CD4-positive, alpha-beta T cell (primary cell): ENCODE measurements at regions of chrX and their contacts with region 1.

Region 1: GRCh38 chrX:19887911-19888879 is 795 bp upstream of the SH3KBP1 start:
- DNase-seq: peak in 13 of 14 experiments; percentile 9 to 81 (median 26)
- ATAC-seq: peak; percentile 62
- H3K4me3 ChIP-seq: peak overlapping the region; percentile 66
- H3K4me3 Mint-ChIP-seq: peak overlapping the region; percentile 88
- H3K27ac ChIP-seq: peak overlapping the region in 1 of 2 donors; percentile 56
- H3K27ac Mint-ChIP-seq: peak overlapping the region; percentile 85
- H3K4me1 ChIP-seq: peaks cover 34% of the 10 kb centered on the region
- H3K4me1 Mint-ChIP-seq: peaks cover 51% of the 10 kb centered on the region
- H3K27me3 ChIP-seq: no peaks in the 10 kb centered on the region
- H3K27me3 Mint-ChIP-seq: no peaks in the 10 kb centered on the region
- CTCF ChIP-seq: peak; percentile 35

Region 2: GRCh38 chrX:19372170-19372546 is 516.0 kb before region 1 on chrX:
- CTCF ChIA-PET with region 1: no interaction called
- POLR2A ChIA-PET with region 1: interaction called, 3 read pairs
- intact Hi-C with region 1: loop called in 1 of 2 experiments (anchors 5 kb)
- DNase-seq: peak; percentile 33 to 77 (median 56)
- ATAC-seq: peak; percentile 76
- H3K4me3 ChIP-seq: peak overlapping the region; percentile 59
- H3K4me3 Mint-ChIP-seq: peak overlapping the region; percentile 80
- H3K27ac ChIP-seq: no peak overlapping the region
- H3K27ac Mint-ChIP-seq: no peak overlapping the region
- H3K4me1 ChIP-seq: peaks cover 11% of the 10 kb centered on the region
- H3K4me1 Mint-ChIP-seq: peaks cover 9% of the 10 kb centered on the region
- H3K27me3 ChIP-seq: no peaks in the 10 kb centered on the region
- H3K27me3 Mint-ChIP-seq: no peaks in the 10 kb centered on the region
- CTCF ChIP-seq: peak; percentile 67

Region 3: DNA sequence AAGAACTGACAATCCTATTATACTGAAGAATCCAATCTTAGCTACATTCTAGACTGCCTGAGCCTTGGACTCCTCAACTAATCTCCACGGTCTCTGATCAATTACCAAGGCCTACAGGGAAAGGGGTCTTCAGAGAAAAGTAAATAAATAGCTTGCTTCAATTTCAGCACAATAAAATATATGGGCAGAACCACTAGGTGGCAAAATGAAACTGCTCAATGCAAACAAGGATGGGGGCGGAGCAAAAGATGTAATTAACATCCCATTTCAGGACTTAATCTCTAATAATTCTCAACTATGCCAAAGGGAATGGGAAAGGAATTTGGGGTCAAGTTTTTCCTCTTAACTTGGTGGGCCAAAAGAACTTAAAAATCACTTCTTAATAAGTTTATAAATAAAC is 294.5 kb before region 1 on chrX:
- CTCF ChIA-PET with region 1: interaction called, 3 read pairs
- POLR2A ChIA-PET with region 1: no interaction called
- intact Hi-C with region 1: loop called (anchors 1 kb)
- DNase-seq: peak in 6 of 14 experiments; percentile 3 to 62 (median 44)
- ATAC-seq: peak; percentile 44
- H3K4me3 ChIP-seq: no peak overlapping the region
- H3K4me3 Mint-ChIP-seq: no peak overlapping the region
- H3K27ac ChIP-seq: no peak overlapping the region
- H3K27ac Mint-ChIP-seq: no peak overlapping the region
- H3K4me1 ChIP-seq: no peaks in the 10 kb centered on the region
- H3K4me1 Mint-ChIP-seq: peaks cover 10% of the 10 kb centered on the region
- H3K27me3 ChIP-seq: no peaks in the 10 kb centered on the region
- H3K27me3 Mint-ChIP-seq: no peaks in the 10 kb centered on the region
- CTCF ChIP-seq: peak; percentile 54

Region 4: DNA sequence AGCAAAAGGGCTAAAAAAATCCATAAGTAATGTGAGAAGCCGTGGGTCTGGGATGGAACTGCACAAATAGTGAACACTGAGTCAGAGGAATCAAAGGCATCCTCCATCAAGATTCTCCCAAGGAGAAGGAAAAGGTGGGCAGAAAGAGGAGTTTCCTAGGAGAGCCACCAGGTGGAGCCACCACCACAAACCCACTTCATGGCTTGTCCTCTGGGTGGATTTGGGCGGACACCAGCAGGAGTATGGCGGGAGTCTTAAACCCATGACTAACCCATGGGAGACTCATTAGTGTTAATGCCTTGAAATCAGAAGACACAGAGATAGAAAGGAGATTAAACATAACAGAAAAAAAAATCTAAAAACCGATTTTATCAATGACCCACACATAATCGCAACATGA is 148.5 kb before region 1 on chrX:
- CTCF ChIA-PET with region 1: no interaction called
- POLR2A ChIA-PET with region 1: interaction called, 3 read pairs
- intact Hi-C with region 1: loop called (anchors 1 to 2 kb)
- DNase-seq: peak in 12 of 14 experiments; percentile 9 to 75 (median 33)
- ATAC-seq: peak; percentile 31
- H3K4me3 ChIP-seq: no peak overlapping the region
- H3K4me3 Mint-ChIP-seq: peak overlapping the region; percentile 56
- H3K27ac ChIP-seq: no peak overlapping the region
- H3K27ac Mint-ChIP-seq: peak overlapping the region; percentile 74
- H3K4me1 ChIP-seq: peaks cover 64% of the 10 kb centered on the region
- H3K4me1 Mint-ChIP-seq: peaks cover 79% of the 10 kb centered on the region
- H3K27me3 ChIP-seq: no peaks in the 10 kb centered on the region
- H3K27me3 Mint-ChIP-seq: no peaks in the 10 kb centered on the region
- CTCF ChIP-seq: peak; percentile 53

Region 5: DNA sequence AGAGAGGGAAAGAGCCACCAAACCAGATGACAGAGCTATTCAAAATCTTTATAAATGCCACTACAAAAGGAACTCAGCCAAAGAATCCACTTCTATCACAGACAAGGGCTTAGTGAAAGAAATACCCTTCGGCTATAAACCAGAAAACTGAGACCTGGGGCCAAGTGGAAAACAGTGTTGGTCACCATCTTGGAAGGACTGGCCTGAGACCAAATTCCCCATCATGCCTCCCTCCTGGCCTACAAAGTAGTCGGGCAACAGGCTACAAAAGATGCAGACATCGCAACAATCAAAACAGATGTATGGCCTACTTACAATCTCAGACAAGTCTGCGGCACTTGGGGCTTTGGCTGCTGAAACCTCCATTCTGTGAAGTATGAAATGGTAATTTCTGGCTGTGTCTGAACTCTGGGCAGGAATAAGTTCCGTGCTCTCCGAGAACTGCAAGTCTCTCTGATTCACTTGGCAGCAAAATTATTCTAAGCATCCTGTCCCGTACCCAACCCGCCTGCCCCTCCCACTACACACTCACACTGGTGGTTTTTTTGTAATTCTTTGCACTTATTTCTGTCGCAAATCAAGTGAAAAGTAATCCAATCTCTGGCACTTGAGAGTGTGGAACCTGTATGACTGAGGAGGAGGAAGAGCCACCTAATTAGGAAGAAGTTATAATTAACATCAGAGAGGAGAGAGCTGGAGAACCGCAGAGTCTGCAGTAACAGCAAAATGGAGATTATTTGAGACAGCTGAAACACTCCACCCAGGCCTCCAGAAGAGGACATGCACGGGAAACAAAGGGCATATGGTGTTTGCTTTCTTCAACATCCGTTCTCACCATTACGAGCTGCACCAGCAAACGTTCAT is 88.6 kb before region 1 on chrX:
- CTCF ChIA-PET with region 1: interaction called, 3 read pairs
- POLR2A ChIA-PET with region 1: interaction called, 12 read pairs
- intact Hi-C with region 1: loop called in 1 of 2 experiments (anchors 5 kb)
- DNase-seq: peak in 13 of 14 experiments; percentile 21 to 79 (median 48)
- ATAC-seq: peak; percentile 82
- H3K4me3 ChIP-seq: peak overlapping the region; percentile 75
- H3K4me3 Mint-ChIP-seq: peak overlapping the region; percentile 84
- H3K27ac ChIP-seq: peak overlapping the region; percentile 72 to 74
- H3K27ac Mint-ChIP-seq: peak overlapping the region; percentile 90
- H3K4me1 ChIP-seq: peaks cover 64% of the 10 kb centered on the region
- H3K4me1 Mint-ChIP-seq: peaks cover 74% of the 10 kb centered on the region
- H3K27me3 ChIP-seq: no peaks in the 10 kb centered on the region
- H3K27me3 Mint-ChIP-seq: no peaks in the 10 kb centered on the region
- CTCF ChIP-seq: no peak

Region 6: GRCh38 chrX:19824603-19825002 is 63.6 kb before region 1 on chrX:
- CTCF ChIA-PET with region 1: no interaction called
- POLR2A ChIA-PET with region 1: interaction called, 3 read pairs
- intact Hi-C with region 1: loop called in 1 of 2 experiments (anchors 10 kb)
- DNase-seq: peak in 4 of 14 experiments; percentile 39 to 56 (median 44)
- ATAC-seq: peak; percentile 71
- H3K4me3 ChIP-seq: no peak overlapping the region
- H3K4me3 Mint-ChIP-seq: no peak overlapping the region
- H3K27ac ChIP-seq: no peak overlapping the region
- H3K27ac Mint-ChIP-seq: peak overlapping the region; percentile 69
- H3K4me1 ChIP-seq: peaks cover 21% of the 10 kb centered on the region
- H3K4me1 Mint-ChIP-seq: peaks cover 46% of the 10 kb centered on the region
- H3K27me3 ChIP-seq: no peaks in the 10 kb centered on the region
- H3K27me3 Mint-ChIP-seq: no peaks in the 10 kb centered on the region
- CTCF ChIP-seq: no peak